Activated CD8-positive, alpha-beta T cell treated with anti-CD3 and anti-CD28 coated beads, Interleukin-2, amount 10 ng/mL, durations not matched to agents 7 days and 5 days (primary cell): ENCODE measurements at regions of chr6 and their contacts with region 1.

Region 1: GRCh38 chr6:26285143-26286134 is 79.6 kb upstream of the BTN3A2 start:
- DNase-seq: peak; percentile 99
- ATAC-seq: peak; percentile 79
- H3K4me3 Mint-ChIP-seq: peak overlapping the region; percentile 93
- H3K27ac Mint-ChIP-seq: peak overlapping the region; percentile 95
- H3K4me1 Mint-ChIP-seq: peaks cover 42% of the 10 kb centered on the region
- H3K27me3 Mint-ChIP-seq: peaks cover 2% of the 10 kb centered on the region

Region 2: GRCh38 chr6:25257686-25258348 is 1027.6 kb before region 1 on chr6:
- CTCF ChIA-PET with region 1: no interaction called
- POLR2A ChIA-PET with region 1: no interaction called
- DNase-seq: no peak
- ATAC-seq: no peak
- H3K4me3 Mint-ChIP-seq: no peak overlapping the region
- H3K27ac Mint-ChIP-seq: no peak overlapping the region
- H3K4me1 Mint-ChIP-seq: no peaks in the 10 kb centered on the region
- H3K27me3 Mint-ChIP-seq: no peaks in the 10 kb centered on the region

Region 3: DNA sequence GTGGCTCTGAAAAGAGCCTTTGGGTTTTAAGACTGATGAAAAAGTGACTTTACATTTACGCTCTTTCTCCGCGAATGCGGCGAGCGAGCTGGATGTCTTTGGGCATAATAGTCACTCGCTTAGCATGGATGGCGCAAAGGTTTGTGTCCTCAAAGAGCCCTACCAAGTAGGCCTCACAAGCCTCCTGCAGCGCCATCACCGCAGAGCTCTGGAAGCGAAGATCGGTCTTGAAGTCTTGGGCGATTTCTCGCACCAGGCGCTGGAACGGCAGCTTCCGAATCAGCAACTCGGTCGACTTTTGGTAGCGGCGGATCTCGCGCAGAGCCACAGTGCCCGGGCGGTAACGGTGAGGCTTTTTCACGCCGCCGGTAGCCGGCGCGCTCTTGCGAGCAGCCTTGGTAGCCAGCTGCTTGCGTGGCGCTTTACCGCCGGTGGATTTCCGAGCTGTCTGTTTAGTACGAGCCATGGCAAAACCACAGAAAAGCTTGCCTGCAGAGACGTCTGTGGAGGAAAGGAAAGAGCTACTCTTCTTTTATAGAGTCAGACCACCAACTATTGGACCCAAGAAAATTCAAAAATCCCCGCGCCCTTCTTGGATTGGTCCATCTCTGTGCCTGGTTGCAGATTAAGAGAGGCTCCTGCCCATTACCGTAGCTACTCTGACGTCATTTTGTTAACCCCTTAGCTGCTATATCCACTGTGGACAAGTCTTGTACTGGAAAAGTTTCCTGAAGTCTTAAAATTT is 253.7 kb before region 1 on chr6:
- CTCF ChIA-PET with region 1: no interaction called
- POLR2A ChIA-PET with region 1: interaction called, 14 read pairs
- DNase-seq: peak; percentile 97
- ATAC-seq: peak; percentile 66
- H3K4me3 Mint-ChIP-seq: peak overlapping the region; percentile 93
- H3K27ac Mint-ChIP-seq: peak overlapping the region; percentile 99
- H3K4me1 Mint-ChIP-seq: peaks cover 68% of the 10 kb centered on the region
- H3K27me3 Mint-ChIP-seq: peaks cover 3% of the 10 kb centered on the region

Region 4: DNA sequence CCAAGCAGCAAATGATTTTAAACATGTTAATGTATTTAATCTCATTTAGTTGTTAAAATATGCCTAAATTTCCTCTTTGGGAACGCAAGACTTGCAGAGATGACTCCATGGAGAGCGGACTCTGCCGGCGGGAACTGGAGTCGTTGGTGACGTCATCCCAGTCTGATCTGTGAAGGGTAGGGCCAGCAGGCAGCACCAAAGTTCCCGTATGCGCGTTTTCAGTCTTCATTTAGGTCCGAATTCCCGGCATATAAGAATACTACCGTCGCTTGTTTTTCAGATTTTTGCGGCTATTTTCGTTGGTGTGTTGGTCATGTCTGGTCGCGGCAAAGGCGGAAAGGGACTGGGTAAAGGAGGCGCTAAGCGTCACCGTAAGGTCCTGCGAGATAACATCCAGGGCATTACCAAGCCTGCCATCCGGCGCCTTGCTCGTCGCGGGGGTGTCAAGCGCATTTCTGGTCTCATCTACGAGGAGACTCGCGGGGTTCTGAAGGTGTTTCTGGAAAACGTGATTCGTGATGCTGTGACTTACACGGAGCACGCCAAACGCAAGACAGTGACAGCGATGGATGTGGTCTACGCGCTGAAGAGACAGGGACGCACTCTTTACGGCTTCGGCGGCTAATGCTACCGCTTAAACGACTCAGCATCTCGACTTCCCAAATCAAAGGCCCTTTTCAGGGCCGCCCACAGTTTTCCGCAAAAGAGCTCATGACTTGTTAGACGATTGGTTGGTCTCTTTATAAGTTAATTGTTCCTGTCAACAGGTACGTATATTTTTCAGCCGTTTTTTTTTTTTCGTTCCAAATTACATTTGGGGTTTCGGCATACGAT is 80.9 kb before region 1 on chr6:
- CTCF ChIA-PET with region 1: no interaction called
- POLR2A ChIA-PET with region 1: interaction called, 84 read pairs
- DNase-seq: peak; percentile 95
- ATAC-seq: peak; percentile 66
- H3K4me3 Mint-ChIP-seq: no peak overlapping the region
- H3K27ac Mint-ChIP-seq: no peak overlapping the region
- H3K4me1 Mint-ChIP-seq: peaks cover 41% of the 10 kb centered on the region
- H3K27me3 Mint-ChIP-seq: no peaks in the 10 kb centered on the region

Region 5: DNA sequence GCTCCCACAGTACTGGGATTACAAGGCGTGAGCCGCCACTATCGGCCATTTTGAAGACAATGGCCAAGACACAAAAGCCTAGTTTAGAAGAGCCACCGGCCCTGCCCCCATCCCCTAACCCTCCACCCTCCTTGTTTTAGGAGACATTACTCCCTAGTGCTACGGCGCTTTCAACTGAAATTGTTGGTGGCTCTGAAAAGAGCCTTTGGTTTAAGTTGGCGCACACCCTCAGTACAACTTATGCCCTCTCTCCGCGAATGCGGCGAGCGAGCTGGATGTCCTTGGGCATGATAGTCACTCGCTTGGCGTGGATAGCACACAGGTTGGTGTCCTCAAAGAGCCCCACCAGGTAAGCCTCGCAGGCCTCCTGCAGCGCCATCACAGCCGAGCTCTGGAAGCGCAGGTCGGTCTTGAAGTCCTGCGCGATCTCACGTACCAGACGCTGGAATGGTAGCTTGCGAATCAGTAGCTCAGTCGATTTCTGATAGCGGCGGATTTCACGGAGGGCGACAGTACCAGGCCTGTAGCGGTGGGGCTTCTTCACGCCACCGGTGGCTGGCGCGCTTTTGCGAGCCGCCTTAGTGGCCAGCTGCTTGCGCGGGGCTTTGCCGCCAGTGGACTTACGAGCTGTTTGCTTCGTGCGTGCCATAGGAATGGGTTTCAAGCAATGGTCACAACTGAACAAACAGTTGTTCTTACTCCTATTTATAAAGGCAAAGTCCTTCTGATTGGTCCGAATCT is 35.3 kb before region 1 on chr6:
- CTCF ChIA-PET with region 1: interaction called, 19 read pairs
- POLR2A ChIA-PET with region 1: no interaction called
- DNase-seq: peak; percentile 85
- ATAC-seq: peak; percentile 55
- H3K4me3 Mint-ChIP-seq: peak overlapping the region; percentile 84
- H3K27ac Mint-ChIP-seq: peak overlapping the region; percentile 100
- H3K4me1 Mint-ChIP-seq: peaks cover 30% of the 10 kb centered on the region
- H3K27me3 Mint-ChIP-seq: no peaks in the 10 kb centered on the region

Region 6: GRCh38 chr6:26537846-26538571 is 252.6 kb after region 1 on chr6 and contains the start of gene HMGN4:
- CTCF ChIA-PET with region 1: no interaction called
- POLR2A ChIA-PET with region 1: interaction called, 14 read pairs
- DNase-seq: peak; percentile 88
- ATAC-seq: peak; percentile 71
- H3K4me3 Mint-ChIP-seq: peak within 1 kb of the TSS; percentile 87
- H3K27ac Mint-ChIP-seq: peak within 1 kb of the TSS; percentile 99
- H3K4me1 Mint-ChIP-seq: peaks cover 58% of the 10 kb centered on the region
- H3K27me3 Mint-ChIP-seq: peaks cover 2% of the 10 kb centered on the region
- total RNA-seq, gene HMGN4: 80.8 to 84.9 TPM